ENCODE measurements at regions of chr2 and their contacts with region 1.

Region 1: GRCh38 chr2:16623031-16623430 is 42.6 kb downstream of the CYRIA start:
- DNase-seq: no peak
- ATAC-seq: no peak
- H3K4me3 ChIP-seq: no peak overlapping the region
- H3K4me3 Mint-ChIP-seq: no peak overlapping the region
- H3K27ac ChIP-seq: no peak overlapping the region
- H3K27ac Mint-ChIP-seq: no peak overlapping the region
- H3K4me1 ChIP-seq: no peaks in the 10 kb centered on the region
- H3K4me1 Mint-ChIP-seq: peaks cover 32% of the 10 kb centered on the region
- H3K27me3 ChIP-seq: no peaks in the 10 kb centered on the region
- H3K27me3 Mint-ChIP-seq: no peaks in the 10 kb centered on the region
- CTCF ChIP-seq: no peak

Region 2: GRCh38 chr2:17181051-17181752 is 558.2 kb after region 1 on chr2:
- CTCF ChIA-PET with region 1: no interaction called
- POLR2A ChIA-PET with region 1: no interaction called
- intact Hi-C with region 1: loop called in 1 of 2 experiments (anchors 5 kb)
- DNase-seq: no peak
- ATAC-seq: no peak
- H3K4me3 ChIP-seq: no peak overlapping the region
- H3K4me3 Mint-ChIP-seq: no peak overlapping the region
- H3K27ac ChIP-seq: no peak overlapping the region
- H3K27ac Mint-ChIP-seq: no peak overlapping the region
- H3K4me1 ChIP-seq: no peaks in the 10 kb centered on the region
- H3K4me1 Mint-ChIP-seq: no peaks in the 10 kb centered on the region
- H3K27me3 ChIP-seq: no peaks in the 10 kb centered on the region
- H3K27me3 Mint-ChIP-seq: no peaks in the 10 kb centered on the region
- CTCF ChIP-seq: no peak